ENCODE measurements at regions of chr10 and their contacts with region 1.

Region 1: DNA sequence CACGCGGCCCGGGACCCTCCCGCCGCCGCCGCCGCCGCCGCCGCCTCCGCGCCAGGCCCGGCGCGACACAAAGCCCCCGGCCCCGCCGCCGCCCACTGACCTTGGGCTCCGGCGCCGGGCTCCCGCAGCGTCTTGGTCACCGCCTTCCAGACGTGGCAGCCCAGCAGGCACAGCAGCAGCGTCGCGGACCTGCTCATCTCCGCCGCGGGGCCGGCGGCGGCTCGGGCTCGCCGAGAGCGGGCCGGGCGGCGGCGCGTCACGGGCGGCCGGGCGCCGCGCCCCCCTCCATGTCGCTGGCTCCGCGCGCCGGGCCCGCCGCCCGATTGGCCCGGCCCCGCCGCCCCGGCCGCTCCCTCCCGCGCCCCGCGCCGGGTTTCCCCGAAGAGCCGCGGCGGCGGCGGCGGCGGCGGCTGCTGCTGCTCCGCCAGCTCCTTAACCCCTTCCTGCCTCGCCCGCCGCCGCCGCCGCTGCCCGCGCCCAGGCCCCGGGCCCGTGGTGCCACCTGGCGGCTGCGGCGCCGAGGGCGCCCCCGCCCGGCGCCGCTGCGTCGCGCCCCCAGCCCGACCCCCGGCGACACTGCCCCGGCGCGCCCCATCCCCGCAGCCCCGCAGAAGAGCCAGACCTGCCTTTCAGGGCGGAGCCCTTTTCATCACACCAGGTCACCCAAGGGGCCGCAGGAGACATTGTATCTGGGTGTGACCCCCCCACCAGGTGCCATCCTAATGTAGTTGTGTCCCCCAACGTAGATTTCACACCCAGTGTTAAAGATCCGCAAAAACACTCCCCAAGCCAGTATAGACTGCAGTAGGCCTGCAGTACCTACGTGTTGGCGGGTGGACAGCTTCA is at the start of gene FAM171A1:
- DNase-seq: peak; percentile 60 to 77
- ATAC-seq: peak; percentile 86
- total RNA-seq, gene FAM171A1: 53.5 to 60.5 TPM

Region 2: GRCh38 chr10:15209827-15210509 is 161.1 kb before region 1 on chr10:
- intact Hi-C with region 1: loop called in 1 of 2 experiments (anchors 5 kb)
- DNase-seq: peak; percentile 70 to 92
- ATAC-seq: peak; percentile 87

Region 3: DNA sequence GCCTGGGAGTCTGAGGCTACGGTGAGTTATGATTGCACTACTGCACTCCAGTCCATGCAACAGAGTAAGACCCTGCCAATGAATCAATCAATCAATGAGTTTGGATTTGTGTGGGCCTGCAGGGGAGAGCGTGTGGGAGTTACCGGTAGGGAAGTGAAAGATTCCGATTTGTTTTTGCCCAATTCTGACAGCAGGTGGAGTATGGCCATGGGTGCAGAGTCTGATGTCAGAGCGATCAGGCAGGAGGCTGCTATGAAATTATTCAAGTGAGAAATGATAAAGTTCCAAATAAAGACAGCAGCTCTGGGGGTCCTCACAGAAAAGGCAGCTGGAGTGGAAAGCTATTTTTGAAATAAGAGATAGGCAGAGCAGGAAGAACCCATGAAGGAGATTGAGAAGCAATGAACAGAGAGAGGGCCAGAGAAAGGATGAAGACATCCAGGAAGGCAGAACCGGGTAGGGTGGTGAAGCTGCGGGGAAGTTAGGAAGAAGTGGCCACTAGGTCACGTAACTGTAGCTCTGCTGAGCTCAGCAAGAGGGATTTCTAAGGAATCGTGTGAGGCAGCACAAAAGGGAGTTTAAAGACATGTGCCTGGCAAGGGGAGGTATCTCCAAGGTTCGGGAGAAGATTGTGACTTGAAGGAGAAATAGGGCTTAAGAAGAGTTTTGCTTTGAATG is 108.9 kb before region 1 on chr10:
- intact Hi-C with region 1: loop called in 1 of 2 experiments (anchors 5 kb)
- DNase-seq: peak in 1 of 2 donors; percentile 18
- ATAC-seq: peak; percentile 85

Measured in left colon (tissue), 2 donors.